H1 (cell line): ENCODE measurements at regions of chr20 and their contacts with region 1.

Region 1: GRCh38 chr20:38907918-38908677 is 18.1 kb upstream of the FAM83D start:
- DNase-seq: no peak
- H3K4me3 ChIP-seq: no peak overlapping the region
- H3K27ac ChIP-seq: no peak overlapping the region
- H3K4me1 ChIP-seq: no peaks in the 10 kb centered on the region
- H3K27me3 ChIP-seq: no peaks in the 10 kb centered on the region
- CTCF ChIP-seq: no peak
- EP300 ChIP-seq: no peak
- POLR2A ChIP-seq: no peak
- RAD21 ChIP-seq: no peak

Region 2: DNA sequence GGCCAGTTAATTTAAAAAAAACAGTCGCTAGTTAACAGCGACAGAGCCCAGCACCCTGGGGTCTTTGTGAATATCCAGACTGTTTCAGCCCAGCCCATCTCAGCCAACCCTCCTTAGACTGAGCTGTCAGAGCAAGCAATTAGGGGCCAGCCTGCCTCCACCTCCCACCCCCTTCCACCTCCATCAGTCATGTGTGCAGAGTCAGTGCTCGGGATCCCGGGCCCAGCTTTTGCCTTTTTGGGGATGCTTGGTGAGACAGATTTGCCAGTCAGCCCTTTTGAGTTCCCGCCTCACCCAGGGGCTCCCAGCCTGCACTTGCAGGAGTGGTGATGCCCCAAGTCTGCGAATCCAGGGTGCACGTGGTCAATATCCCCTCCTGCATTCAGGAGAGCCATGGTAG is 11.6 kb after region 1 on chr20:
- CTCF ChIA-PET with region 1: interaction called, 17 read pairs
- POLR2A ChIA-PET with region 1: no interaction called
- DNase-seq: no peak
- H3K4me3 ChIP-seq: no peak overlapping the region
- H3K27ac ChIP-seq: no peak overlapping the region
- H3K4me1 ChIP-seq: no peaks in the 10 kb centered on the region; a peak in 1 of 7 replicates
- H3K27me3 ChIP-seq: no peaks in the 10 kb centered on the region; a peak in 1 of 7 replicates
- CTCF ChIP-seq: no peak
- EP300 ChIP-seq: no peak
- POLR2A ChIP-seq: no peak
- RAD21 ChIP-seq: no peak

Region 3: GRCh38 chr20:38932457-38933120 is 24.5 kb after region 1 on chr20:
- CTCF ChIA-PET with region 1: no interaction called
- POLR2A ChIA-PET with region 1: no interaction called
- DNase-seq: no peak
- H3K4me3 ChIP-seq: no peak overlapping the region
- H3K27ac ChIP-seq: no peak overlapping the region
- H3K4me1 ChIP-seq: peaks cover 6 to 12% (median 9%) of the 10 kb centered on the region in 4 experiments
- H3K27me3 ChIP-seq: no peaks in the 10 kb centered on the region
- CTCF ChIP-seq: no peak
- EP300 ChIP-seq: no peak
- POLR2A ChIP-seq: no peak
- RAD21 ChIP-seq: no peak

Region 4: GRCh38 chr20:39124064-39124463 is 216.0 kb after region 1 on chr20:
- CTCF ChIA-PET with region 1: no interaction called
- POLR2A ChIA-PET with region 1: no interaction called
- DNase-seq: no peak
- H3K4me3 ChIP-seq: no peak overlapping the region
- H3K27ac ChIP-seq: no peak overlapping the region
- H3K4me1 ChIP-seq: peaks cover 8 to 22% (median 12%) of the 10 kb centered on the region in 4 experiments
- H3K27me3 ChIP-seq: peaks cover 0 to 11% (median 6%) of the 10 kb centered on the region in 4 experiments; a peak in 5 of 7 replicates
- CTCF ChIP-seq: no peak
- EP300 ChIP-seq: no peak
- POLR2A ChIP-seq: no peak
- RAD21 ChIP-seq: no peak